Activated CD4-positive, alpha-beta T cell treated with anti-CD3 and anti-CD28 coated beads, Interleukin-2, amount 10 ng/mL, durations not matched to agents 24 days and 14 days (primary cell): ENCODE measurements at regions of chr10 and their contacts with region 1.

Region 1: GRCh38 chr10:26881600-26882331 is 21.0 kb upstream of the ABI1 start:
- DNase-seq: peak; percentile 72
- H3K4me3 Mint-ChIP-seq: no peak overlapping the region
- H3K27ac Mint-ChIP-seq: no peak overlapping the region
- H3K4me1 Mint-ChIP-seq: peaks cover 6% of the 10 kb centered on the region
- H3K27me3 Mint-ChIP-seq: peaks cover 31% of the 10 kb centered on the region

Region 2: GRCh38 chr10:26612151-26612915 is 269.4 kb before region 1 on chr10:
- intact Hi-C with region 1: loop called (anchors 2 kb)
- DNase-seq: no peak
- H3K4me3 Mint-ChIP-seq: no peak overlapping the region
- H3K27ac Mint-ChIP-seq: no peak overlapping the region
- H3K4me1 Mint-ChIP-seq: no peaks in the 10 kb centered on the region
- H3K27me3 Mint-ChIP-seq: peaks cover 15% of the 10 kb centered on the region

Region 3: DNA sequence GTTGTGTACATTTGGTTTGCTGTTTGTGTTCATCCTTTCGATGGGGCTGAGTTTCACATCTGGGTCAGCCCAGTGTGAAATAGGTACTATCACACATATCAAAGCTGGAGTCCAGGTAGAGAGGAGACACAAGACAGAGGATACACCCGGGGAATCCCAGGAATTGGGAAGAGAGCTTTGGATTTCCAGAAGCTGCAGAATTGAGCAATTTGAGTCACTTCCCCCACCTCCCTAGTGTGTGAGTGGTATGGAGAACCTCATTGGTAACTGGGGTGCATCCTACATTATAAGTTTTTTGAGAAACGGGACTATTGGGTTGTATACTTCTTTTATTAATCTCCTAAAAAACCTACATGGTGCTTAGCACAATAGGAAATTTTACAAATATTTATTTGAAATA is 196.3 kb before region 1 on chr10:
- intact Hi-C with region 1: loop called (anchors 2 kb)
- DNase-seq: no peak
- H3K4me3 Mint-ChIP-seq: no peak overlapping the region
- H3K27ac Mint-ChIP-seq: no peak overlapping the region
- H3K4me1 Mint-ChIP-seq: peaks cover 13% of the 10 kb centered on the region
- H3K27me3 Mint-ChIP-seq: peaks cover 1% of the 10 kb centered on the region

Region 4: DNA sequence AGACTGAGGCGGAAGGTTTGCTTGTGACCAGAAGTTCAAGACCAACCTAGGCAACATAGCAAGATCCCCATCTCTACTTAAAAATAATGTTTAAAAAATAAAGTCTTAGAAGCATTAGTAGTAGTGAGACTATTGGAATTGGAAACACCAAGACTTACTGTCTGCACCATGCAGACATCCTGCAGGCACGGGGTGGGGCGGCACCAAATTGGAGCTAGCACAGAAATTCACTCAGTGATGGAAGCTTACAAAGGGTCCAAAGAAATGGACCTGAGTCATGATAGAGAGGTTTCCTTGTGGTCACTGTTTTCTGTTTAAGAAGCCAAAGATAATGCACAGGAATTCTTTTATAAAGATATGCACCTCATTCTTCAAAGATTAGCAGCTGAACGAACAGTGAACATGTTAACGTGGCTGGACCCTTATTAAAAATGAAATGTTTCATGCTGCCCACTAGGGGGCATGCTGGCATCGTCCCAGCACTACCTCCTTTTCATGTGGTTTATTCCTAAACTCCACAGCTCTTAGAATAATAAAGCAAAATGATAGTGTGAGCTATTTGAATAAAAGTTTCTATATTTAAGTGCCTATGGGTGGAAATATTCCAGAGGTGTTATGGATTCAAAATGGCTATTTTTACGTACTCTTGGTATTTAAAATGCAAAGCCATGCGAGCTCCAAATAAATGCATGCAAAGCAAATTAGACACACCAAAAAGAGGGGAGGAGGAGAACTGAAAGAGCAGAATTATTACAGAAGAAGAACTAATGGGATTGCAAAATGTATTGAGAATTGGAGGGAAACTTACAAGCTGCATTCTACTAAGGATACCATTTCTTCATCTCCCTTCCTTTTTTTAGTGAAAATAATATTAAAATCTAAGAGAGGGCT is 155.7 kb before region 1 on chr10:
- intact Hi-C with region 1: loop called (anchors 1 kb)
- DNase-seq: peak; percentile 80
- H3K4me3 Mint-ChIP-seq: no peak overlapping the region
- H3K27ac Mint-ChIP-seq: no peak overlapping the region
- H3K4me1 Mint-ChIP-seq: peaks cover 14% of the 10 kb centered on the region
- H3K27me3 Mint-ChIP-seq: no peaks in the 10 kb centered on the region

Region 5: DNA sequence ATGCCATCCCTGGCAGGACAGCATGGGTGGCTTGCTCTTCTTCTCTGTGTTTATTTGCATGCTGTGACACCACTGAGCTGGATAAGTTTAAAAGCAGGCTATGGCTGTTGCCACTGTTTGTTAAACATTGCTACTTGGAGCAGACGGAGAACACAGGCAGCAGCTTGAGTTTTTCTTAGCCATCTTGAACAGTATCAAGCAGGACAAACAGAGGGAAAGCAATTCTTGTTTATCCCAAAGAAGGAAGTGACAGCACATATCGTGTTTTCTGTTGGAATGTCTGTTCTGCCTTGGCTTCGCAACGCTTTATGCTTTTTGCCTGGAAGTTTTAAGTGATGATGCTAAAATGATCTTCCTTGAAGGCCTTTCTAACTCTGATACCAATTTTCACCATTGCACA is 790.1 kb after region 1 on chr10:
- intact Hi-C with region 1: no loop called
- DNase-seq: no peak
- H3K4me3 Mint-ChIP-seq: no peak overlapping the region
- H3K27ac Mint-ChIP-seq: no peak overlapping the region
- H3K4me1 Mint-ChIP-seq: no peaks in the 10 kb centered on the region
- H3K27me3 Mint-ChIP-seq: no peaks in the 10 kb centered on the region